ENCODE measurements at regions of chr13 and their contacts with region 1.

Region 1: DNA sequence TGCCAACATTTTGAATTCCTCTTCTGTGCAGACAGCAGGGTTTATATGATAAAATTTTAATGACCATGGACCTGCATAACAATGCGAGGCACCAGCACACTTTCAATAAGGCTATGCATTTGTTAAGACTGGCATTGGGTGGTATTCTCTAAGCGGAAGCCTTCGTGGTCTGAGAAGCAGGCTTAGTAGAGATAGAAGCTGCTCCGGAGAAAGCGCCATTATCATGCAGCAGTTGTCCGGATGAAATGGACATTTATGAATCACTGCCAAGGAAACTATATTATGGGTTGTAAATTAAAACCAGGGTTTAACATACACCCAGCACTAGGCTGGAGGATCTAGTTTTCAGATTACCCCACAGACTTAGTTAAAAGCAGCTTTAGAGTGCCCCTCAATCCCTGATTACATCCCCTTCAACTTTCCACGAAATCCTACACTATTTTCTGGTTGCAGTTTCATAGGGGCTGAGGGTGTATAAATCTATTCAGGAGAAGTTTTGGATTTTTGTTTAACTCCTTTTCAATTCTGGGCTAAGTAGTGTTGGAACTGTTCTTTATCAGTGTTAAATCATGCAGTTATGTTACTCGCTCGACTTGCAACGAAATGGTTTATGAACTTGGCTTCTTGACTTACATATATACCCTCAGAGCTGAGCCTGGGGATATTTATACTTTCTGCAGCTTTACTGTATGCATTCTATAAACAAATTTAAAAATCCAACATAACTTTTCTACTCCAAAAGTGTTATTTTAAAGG is 193.3 kb downstream of the PCDH9 start:
- DNase-seq: no peak
- H3K4me3 ChIP-seq: no peak overlapping the region
- H3K27ac ChIP-seq: no peak overlapping the region
- H3K4me1 ChIP-seq: no peaks in the 10 kb centered on the region
- CTCF ChIP-seq: no peak

Region 2: GRCh38 chr13:67023130-67023879 is 13.6 kb before region 1 on chr13:
- CTCF ChIA-PET with region 1: no interaction called
- POLR2A ChIA-PET with region 1: interaction called, 15 read pairs
- intact Hi-C with region 1: no loop called
- DNase-seq: peak; percentile 37
- H3K4me3 ChIP-seq: no peak overlapping the region
- H3K27ac ChIP-seq: no peak overlapping the region
- H3K4me1 ChIP-seq: peaks cover 21% of the 10 kb centered on the region
- CTCF ChIP-seq: no peak